ENCODE measurements at regions of chr3 and their contacts with region 1.

Region 1: GRCh38 chr3:42652611-42653302 is 740 bp upstream of the ZBTB47 start:
- DNase-seq: no peak
- H3K4me3 ChIP-seq: peak overlapping the region in 1 of 2 donors; percentile 64
- H3K27ac ChIP-seq: peak overlapping the region; percentile 85 to 90
- H3K4me1 ChIP-seq: no peaks in the 10 kb centered on the region
- H3K27me3 ChIP-seq: no peaks in the 10 kb centered on the region
- CTCF ChIP-seq: no peak
- POLR2A ChIP-seq: peak; percentile 86

Region 2: GRCh38 chr3:42600111-42600988 is 52.4 kb before region 1 on chr3 and contains the start of gene NKTR:
- intact Hi-C with region 1: loop called (anchors 2 kb)
- DNase-seq: peak; percentile 99
- H3K4me3 ChIP-seq: peak within 1 kb of the TSS; percentile 75 to 77
- H3K27ac ChIP-seq: peak within 1 kb of the TSS; percentile 92 to 96
- H3K4me1 ChIP-seq: peaks cover 4% of the 10 kb centered on the region
- H3K27me3 ChIP-seq: no peaks in the 10 kb centered on the region
- CTCF ChIP-seq: peak in 3 of 4 experiments; percentile 18 to 47 (median 29)
- POLR2A ChIP-seq: peak; percentile 79
- total RNA-seq, gene NKTR: 42.2 to 91.6 TPM

Region 3: GRCh38 chr3:42749753-42750231 is 97.0 kb after region 1 on chr3:
- intact Hi-C with region 1: loop called (anchors 2 kb)
- DNase-seq: no peak
- H3K4me3 ChIP-seq: no peak overlapping the region
- H3K27ac ChIP-seq: peak overlapping the region; percentile 1 to 2
- H3K4me1 ChIP-seq: peaks cover 14% of the 10 kb centered on the region
- H3K27me3 ChIP-seq: no peaks in the 10 kb centered on the region
- CTCF ChIP-seq: peak in 2 of 4 experiments; percentile 28 to 32
- POLR2A ChIP-seq: no peak

Measured in prostate gland (tissue), 2 donors.